IMR-90 (cell line): ENCODE measurements at regions of chr5 and their contacts with region 1.

Region 1: GRCh38 chr5:36606428-36607113 is at the start of gene SLC1A3:
- DNase-seq: peak; percentile 68
- ATAC-seq: peak; percentile 96
- H3K4me3 ChIP-seq: peak within 1 kb of the TSS; percentile 47
- H3K27ac ChIP-seq: no peak within 1 kb of the TSS
- H3K4me1 ChIP-seq: no peaks in the 10 kb centered on the region
- H3K27me3 ChIP-seq: no peaks in the 10 kb centered on the region; the same call in 1 of the 2 replicates
- CTCF ChIP-seq: no peak
- POLR2A ChIP-seq: no peak
- RAD21 ChIP-seq: no peak
- total RNA-seq, gene SLC1A3: 0.56 and 1.3 TPM in 2 replicates

Region 2: DNA sequence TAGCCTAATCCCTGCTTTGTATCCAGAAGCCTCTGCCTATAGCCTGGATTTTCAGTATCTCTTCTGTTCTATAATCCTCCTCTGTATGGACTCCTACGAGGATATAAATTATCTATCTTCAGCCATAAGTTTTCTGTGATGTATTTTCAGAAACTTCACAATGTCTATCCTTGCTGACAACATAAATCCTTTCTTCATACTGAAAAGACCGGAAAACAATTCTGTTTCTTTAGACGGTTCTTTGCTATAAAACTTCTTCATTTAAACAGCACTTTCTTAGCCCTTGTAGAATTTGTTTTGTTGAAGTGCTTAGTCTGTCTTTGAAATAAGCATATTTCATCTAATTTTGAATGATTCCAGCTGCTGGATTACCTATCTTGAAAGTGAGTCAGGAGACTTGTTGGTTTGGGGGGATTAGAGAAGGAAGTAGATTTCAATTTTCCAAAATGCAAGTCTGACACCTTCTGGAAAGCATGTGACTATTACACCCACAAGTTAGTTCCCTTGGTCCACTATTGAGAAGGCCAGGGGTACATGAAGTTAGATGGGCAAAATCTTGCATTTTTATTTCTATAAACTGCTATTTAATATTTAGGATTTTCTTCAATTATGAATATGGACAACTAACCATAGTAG is 208.6 kb before region 1 on chr5:
- CTCF ChIA-PET with region 1: no interaction called
- POLR2A ChIA-PET with region 1: no interaction called
- dilution Hi-C with region 1: no loop called
- in situ Hi-C with region 1: no loop called
- intact Hi-C with region 1: no loop called
- DNase-seq: peak; percentile 17
- ATAC-seq: peak; percentile 40; the same call in 1 of the 2 replicates
- H3K4me3 ChIP-seq: no peak overlapping the region
- H3K27ac ChIP-seq: no peak overlapping the region
- H3K4me1 ChIP-seq: no peaks in the 10 kb centered on the region
- H3K27me3 ChIP-seq: peaks cover 4% of the 10 kb centered on the region
- CTCF ChIP-seq: 0 out of 2 replicates have a peak, but pooled peaks have one; percentile 17
- POLR2A ChIP-seq: no peak
- RAD21 ChIP-seq: no peak

Region 3: GRCh38 chr5:36657563-36657995 is 51.0 kb after region 1 on chr5:
- CTCF ChIA-PET with region 1: no interaction called
- POLR2A ChIA-PET with region 1: no interaction called
- dilution Hi-C with region 1: no loop called
- in situ Hi-C with region 1: no loop called
- intact Hi-C with region 1: loop called (anchors 2 kb)
- DNase-seq: peak; percentile 99
- ATAC-seq: peak; percentile 93
- H3K4me3 ChIP-seq: no peak overlapping the region
- H3K27ac ChIP-seq: peak overlapping the region; percentile 47
- H3K4me1 ChIP-seq: peaks cover 5% of the 10 kb centered on the region
- H3K27me3 ChIP-seq: no peaks in the 10 kb centered on the region
- CTCF ChIP-seq: no peak
- POLR2A ChIP-seq: no peak
- RAD21 ChIP-seq: no peak

Region 4: GRCh38 chr5:36772276-36773140 is 165.9 kb after region 1 on chr5:
- CTCF ChIA-PET with region 1: no interaction called
- POLR2A ChIA-PET with region 1: no interaction called
- dilution Hi-C with region 1: no loop called
- in situ Hi-C with region 1: no loop called
- intact Hi-C with region 1: no loop called
- DNase-seq: no peak
- ATAC-seq: no peak
- H3K4me3 ChIP-seq: no peak overlapping the region
- H3K27ac ChIP-seq: no peak overlapping the region
- H3K4me1 ChIP-seq: no peaks in the 10 kb centered on the region
- H3K27me3 ChIP-seq: peaks cover 2% of the 10 kb centered on the region; the same call in 1 of the 2 replicates
- CTCF ChIP-seq: no peak
- POLR2A ChIP-seq: no peak
- RAD21 ChIP-seq: no peak

Region 5: DNA sequence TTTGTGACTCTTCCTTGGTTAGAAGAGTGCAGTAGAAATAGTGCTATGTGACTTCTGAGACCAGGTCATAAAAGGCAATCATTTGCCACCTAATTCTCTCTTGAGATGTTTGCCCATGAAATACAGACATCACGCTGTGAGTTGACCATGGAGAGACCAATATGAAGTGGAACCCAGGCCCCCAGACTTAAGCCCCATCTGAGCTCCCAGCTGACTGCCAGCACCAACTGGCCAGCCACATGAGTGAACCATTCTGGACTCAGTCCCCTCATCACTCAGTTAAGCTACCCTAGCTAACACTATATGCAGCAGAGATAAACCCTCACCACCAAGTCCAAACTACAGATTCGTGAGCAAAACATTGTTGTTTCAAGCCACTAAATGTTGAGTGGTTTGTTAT is 209.3 kb after region 1 on chr5:
- CTCF ChIA-PET with region 1: no interaction called
- POLR2A ChIA-PET with region 1: no interaction called
- dilution Hi-C with region 1: no loop called
- in situ Hi-C with region 1: no loop called
- intact Hi-C with region 1: loop called (anchors 5 kb)
- DNase-seq: no peak
- ATAC-seq: no peak
- H3K4me3 ChIP-seq: no peak overlapping the region
- H3K27ac ChIP-seq: no peak overlapping the region
- H3K4me1 ChIP-seq: no peaks in the 10 kb centered on the region
- H3K27me3 ChIP-seq: no peaks in the 10 kb centered on the region
- CTCF ChIP-seq: no peak
- POLR2A ChIP-seq: no peak
- RAD21 ChIP-seq: no peak

Region 6: DNA sequence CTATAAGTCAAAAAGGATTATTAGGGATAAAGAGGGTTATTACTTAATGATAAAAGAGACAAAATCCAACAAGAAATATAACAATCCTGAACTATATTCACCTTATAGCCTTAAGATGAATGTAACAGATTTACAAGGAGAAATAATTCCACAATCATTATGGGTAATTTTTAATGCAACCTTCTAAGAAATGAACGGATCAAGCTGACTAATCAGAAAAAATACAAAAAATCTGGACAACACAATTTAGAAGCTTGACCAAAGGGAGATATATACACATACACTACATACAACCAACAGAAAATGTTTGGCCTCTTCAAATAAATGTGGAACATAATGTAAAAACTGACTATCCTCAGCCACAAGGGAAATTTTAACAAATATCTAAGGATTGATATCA is 540.3 kb after region 1 on chr5:
- CTCF ChIA-PET with region 1: no interaction called
- POLR2A ChIA-PET with region 1: no interaction called
- dilution Hi-C with region 1: no loop called
- in situ Hi-C with region 1: no loop called
- intact Hi-C with region 1: no loop called
- DNase-seq: no peak
- ATAC-seq: no peak
- H3K4me3 ChIP-seq: no peak overlapping the region
- H3K27ac ChIP-seq: no peak overlapping the region
- H3K4me1 ChIP-seq: no peaks in the 10 kb centered on the region
- H3K27me3 ChIP-seq: no peaks in the 10 kb centered on the region
- CTCF ChIP-seq: no peak
- POLR2A ChIP-seq: no peak
- RAD21 ChIP-seq: no peak

Region 7: GRCh38 chr5:37501012-37501551 is 894.5 kb after region 1 on chr5:
- CTCF ChIA-PET with region 1: no interaction called
- POLR2A ChIA-PET with region 1: no interaction called
- dilution Hi-C with region 1: no loop called
- in situ Hi-C with region 1: no loop called
- intact Hi-C with region 1: no loop called
- DNase-seq: peak; percentile 7
- ATAC-seq: no peak
- H3K4me3 ChIP-seq: no peak overlapping the region
- H3K27ac ChIP-seq: no peak overlapping the region
- H3K4me1 ChIP-seq: peaks cover 2% of the 10 kb centered on the region; the same call in 1 of the 2 replicates
- H3K27me3 ChIP-seq: no peaks in the 10 kb centered on the region
- CTCF ChIP-seq: no peak
- POLR2A ChIP-seq: no peak
- RAD21 ChIP-seq: no peak